ENCODE measurements at regions of chr19 and their contacts with region 1.

Region 1: GRCh38 chr19:54189735-54190502 is 539 bp upstream of the MBOAT7 start:
- DNase-seq: peak; percentile 100
- ATAC-seq: peak; percentile 66
- H3K4me3 Mint-ChIP-seq: peak overlapping the region; percentile 75
- H3K27ac Mint-ChIP-seq: peak overlapping the region; percentile 95
- H3K4me1 Mint-ChIP-seq: peaks cover 28% of the 10 kb centered on the region
- H3K27me3 Mint-ChIP-seq: no peaks in the 10 kb centered on the region
- CTCF ChIP-seq: no peak

Region 2: DNA sequence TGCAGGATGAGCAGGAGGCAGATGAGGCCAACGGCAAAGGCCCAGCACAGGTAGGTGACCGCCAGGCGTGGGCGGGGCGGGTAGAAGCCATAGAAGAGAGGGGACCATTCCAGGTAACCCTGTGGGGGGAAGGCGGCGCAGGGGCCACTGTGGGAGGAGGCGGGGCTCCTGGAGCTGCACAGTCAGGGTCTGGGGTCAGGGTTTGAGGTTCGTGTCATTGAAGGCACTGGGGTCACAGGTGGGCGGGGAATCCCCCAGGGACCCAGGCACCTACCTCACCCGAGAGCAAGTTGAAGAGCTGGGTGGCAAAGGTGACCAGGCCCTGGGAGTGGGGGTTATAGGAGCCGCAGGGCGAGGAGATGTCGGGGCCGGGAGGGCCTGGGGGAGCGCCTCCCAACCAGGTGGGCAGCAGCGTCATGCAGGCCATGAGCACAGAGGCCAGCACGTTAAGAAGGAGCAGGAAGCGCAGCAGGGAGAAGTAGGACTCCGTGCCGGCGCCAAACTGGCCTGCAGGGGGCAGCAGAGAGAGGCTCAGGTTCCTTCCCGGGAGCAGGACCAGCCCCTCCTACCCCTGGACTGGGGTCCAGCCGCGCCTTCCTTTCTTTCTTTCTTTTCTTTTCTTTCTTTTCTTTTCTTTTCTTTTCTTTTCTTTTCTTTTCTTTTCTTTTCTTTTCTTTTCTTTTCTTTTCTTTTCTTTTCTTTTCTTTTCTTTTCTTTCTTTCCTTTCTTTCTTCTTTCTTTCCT is 21.6 kb before region 1 on chr19:
- CTCF ChIA-PET with region 1: interaction called, 22 read pairs
- POLR2A ChIA-PET with region 1: interaction called, 4 read pairs
- intact Hi-C with region 1: no loop called
- DNase-seq: peak; percentile 96
- ATAC-seq: peak; percentile 91
- H3K4me3 Mint-ChIP-seq: no peak overlapping the region
- H3K27ac Mint-ChIP-seq: no peak overlapping the region
- H3K4me1 Mint-ChIP-seq: peaks cover 13% of the 10 kb centered on the region
- H3K27me3 Mint-ChIP-seq: peaks cover 11% of the 10 kb centered on the region
- CTCF ChIP-seq: peak; percentile 83

Region 3: GRCh38 chr19:54203151-54203611 is 13.3 kb after region 1 on chr19:
- CTCF ChIA-PET with region 1: interaction called, 5 read pairs
- POLR2A ChIA-PET with region 1: interaction called, 419 read pairs
- intact Hi-C with region 1: loop called (anchors 1 kb)
- DNase-seq: no peak
- ATAC-seq: no peak
- H3K4me3 Mint-ChIP-seq: peak overlapping the region; percentile 87
- H3K27ac Mint-ChIP-seq: peak overlapping the region; percentile 62
- H3K4me1 Mint-ChIP-seq: peaks cover 68% of the 10 kb centered on the region
- H3K27me3 Mint-ChIP-seq: no peaks in the 10 kb centered on the region
- CTCF ChIP-seq: no peak

Region 4: DNA sequence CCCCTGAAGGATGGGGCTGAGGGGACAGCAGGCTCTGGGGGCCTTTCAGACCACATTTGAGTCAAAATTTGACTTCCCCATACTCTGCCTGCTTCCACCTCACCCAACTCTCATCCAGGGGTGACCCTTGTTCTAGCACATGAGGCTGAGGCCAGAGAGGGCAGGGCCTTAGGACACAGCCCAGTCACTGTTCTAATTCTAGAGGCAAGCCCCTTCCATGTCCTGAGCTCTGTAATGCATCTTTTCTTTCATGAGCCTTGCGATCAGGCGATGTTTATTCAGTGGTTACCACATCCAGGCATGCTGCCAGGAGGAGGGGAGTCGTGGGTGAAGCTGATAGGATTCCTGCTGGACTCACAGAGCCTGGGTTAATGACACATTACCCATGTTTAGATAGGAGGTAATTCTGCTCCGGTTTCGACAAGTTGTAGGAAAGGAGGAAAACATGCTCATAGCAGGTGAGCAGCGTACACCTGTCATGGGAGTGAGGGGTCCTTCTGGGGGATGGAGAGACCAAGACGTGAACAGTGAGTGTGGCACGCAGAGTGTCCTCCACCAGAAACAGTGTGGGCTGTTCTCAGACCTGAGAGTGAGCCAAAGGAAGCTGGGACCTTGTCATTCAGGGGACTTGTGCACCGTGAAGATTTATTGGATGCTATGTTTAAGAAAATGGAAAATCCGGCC is 20.0 kb after region 1 on chr19:
- CTCF ChIA-PET with region 1: interaction called, 5 read pairs
- POLR2A ChIA-PET with region 1: interaction called, 419 read pairs
- intact Hi-C with region 1: no loop called
- DNase-seq: peak; percentile 52
- ATAC-seq: no peak
- H3K4me3 Mint-ChIP-seq: no peak overlapping the region
- H3K27ac Mint-ChIP-seq: peak overlapping the region; percentile 49
- H3K4me1 Mint-ChIP-seq: peaks cover 63% of the 10 kb centered on the region
- H3K27me3 Mint-ChIP-seq: no peaks in the 10 kb centered on the region
- CTCF ChIP-seq: no peak

Measured in activated CD8-positive, alpha-beta T cell treated with anti-CD3 and anti-CD28 coated beads for 36 hours (primary cell).